ENCODE measurements at regions of chr1 and their contacts with region 1.

Region 1: GRCh38 chr1:77825131-77825709 is 45.8 kb downstream of the MIGA1 start:
- DNase-seq: no peak
- ATAC-seq: peak; percentile 86 to 93 (median 90)
- H3K4me3 ChIP-seq: no peak overlapping the region
- H3K27ac ChIP-seq: peak overlapping the region; percentile 98
- H3K4me1 ChIP-seq: peaks cover 28% of the 10 kb centered on the region
- H3K27me3 ChIP-seq: no peaks in the 10 kb centered on the region
- CTCF ChIP-seq: peak; percentile 33

Region 2: DNA sequence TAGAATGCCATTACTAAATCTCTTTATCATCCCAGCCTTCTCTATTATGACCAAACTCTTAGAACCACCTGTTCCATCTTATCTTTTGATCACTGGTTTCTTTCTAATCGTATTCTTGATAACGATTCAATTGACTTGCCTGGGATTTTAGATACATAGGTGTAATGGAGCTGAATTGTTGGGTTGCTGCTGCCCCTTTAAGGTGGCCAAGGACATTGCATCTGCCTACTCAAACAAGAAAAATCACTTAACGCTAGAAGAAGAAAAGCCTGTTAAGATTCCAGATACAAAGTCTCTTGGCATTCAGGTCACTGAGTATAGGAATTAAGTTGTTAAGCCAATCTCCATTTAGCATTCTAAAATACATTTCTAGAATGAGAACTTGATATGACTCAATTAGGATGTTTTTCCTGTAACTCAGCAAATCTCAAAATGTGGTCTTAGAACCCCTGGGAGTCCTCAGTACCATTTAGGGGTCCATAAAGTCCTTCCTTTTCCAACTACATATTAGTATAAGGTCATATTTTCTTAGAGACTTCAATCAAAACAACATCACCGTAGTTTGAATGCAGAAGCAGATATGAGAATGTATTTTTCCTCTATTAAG is 75.6 kb after region 1 on chr1:
- intact Hi-C with region 1: loop called (anchors 2 to 5 kb)
- DNase-seq: no peak
- ATAC-seq: peak; percentile 54 to 68 (median 64)
- H3K4me3 ChIP-seq: peak overlapping the region; percentile 51
- H3K27ac ChIP-seq: peak overlapping the region; percentile 81
- H3K4me1 ChIP-seq: peaks cover 50% of the 10 kb centered on the region
- H3K27me3 ChIP-seq: no peaks in the 10 kb centered on the region
- CTCF ChIP-seq: peak; percentile 62